Ascending aorta (tissue), 2 donors: ENCODE measurements at regions of chr1 and their contacts with region 1.

Region 1: DNA sequence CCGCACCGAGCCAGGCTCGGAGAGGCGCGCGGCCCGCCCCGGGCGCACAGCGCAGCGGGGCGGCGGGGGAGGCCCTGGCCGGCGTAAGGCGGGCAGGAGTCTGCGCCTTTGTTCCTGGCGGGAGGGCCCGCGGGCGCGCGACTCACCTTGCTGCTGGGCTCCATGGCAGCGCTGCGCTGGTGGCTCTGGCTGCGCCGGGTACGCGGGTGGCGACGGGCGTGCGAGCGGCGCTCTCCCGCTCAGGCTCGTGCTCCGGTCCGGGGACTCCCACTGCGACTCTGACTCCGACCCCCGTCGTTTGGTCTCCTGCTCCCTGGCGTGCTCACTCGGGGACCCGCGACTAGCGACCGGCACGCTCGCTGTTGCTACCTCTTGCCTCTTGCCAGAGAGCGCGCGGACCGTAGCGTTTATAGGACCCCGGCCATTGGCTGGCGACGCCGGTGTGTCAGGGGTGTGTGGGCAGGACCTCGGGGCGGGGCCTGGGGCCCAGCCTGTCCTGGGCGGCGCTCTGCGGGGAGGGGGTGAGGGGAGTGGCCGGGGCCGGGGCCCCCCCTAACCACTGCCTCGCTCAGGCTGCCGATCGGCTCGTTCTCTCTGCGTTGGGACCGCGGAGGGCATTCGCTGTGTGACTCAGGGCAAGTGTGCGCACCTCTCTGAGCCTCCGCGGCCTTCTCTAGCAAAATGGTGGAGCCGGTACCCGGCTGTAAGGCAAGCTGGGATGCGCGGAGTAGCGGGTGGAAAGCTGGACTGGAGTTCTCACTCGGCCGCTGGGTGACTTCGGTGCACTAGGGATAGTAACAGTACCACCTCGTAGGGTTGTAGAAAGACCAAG is at the start of gene SLC2A1:
- DNase-seq: peak; percentile 88 to 97
- H3K4me3 ChIP-seq: peak within 1 kb of the TSS; percentile 94 to 96
- H3K27ac ChIP-seq: peak within 1 kb of the TSS; percentile 93 to 97
- H3K4me1 ChIP-seq: peaks cover 13 to 34% of the 10 kb centered on the region in 2 donors
- H3K27me3 ChIP-seq: no peaks in the 10 kb centered on the region
- CTCF ChIP-seq: peak in 1 of 3 experiments; percentile 3
- total RNA-seq, gene SLC2A1: 15.5 TPM

Region 2: DNA sequence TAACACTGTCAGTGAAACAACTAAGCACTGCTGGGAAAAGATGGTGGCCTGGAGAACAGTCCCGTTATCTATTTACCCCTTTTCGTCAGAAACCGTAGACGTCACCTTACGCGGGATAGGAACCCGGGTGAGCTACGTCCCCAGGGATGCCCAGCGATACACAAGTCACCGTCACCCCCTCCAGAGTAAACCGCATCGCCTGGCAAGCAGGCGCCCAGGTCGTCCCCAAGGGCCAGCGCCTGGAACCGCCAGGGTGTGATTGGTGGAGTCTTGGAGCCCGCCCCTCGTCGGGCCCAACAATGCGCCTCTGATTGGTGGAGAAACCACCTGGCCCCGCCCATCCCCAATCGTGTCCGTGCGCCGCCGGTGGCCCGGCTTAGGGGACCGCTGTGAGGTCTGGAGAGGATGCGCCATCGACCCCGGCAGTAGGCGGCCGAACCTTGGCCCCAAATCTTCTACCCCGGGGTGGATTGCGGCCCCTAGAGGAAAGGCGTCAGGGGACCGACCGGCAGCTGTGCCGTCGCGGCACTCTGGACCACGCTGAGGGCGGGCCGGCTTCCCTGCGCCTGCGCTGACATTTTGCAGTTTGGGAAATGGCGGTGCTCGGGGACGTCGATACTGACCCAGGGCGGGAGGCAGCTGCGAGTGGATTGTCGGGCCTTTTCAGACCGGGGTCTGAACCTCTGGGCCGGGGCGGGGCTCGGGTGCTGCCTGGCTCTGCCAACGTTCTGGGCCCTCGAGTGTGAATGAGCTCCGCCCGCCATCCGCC is 34.4 kb before region 1 on chr1:
- intact Hi-C with region 1: loop called (anchors 1 kb)
- DNase-seq: peak; percentile 85 to 97
- H3K4me3 ChIP-seq: peak overlapping the region; percentile 81 to 89
- H3K27ac ChIP-seq: peak overlapping the region; percentile 97 to 98
- H3K4me1 ChIP-seq: peaks cover 3 to 9% of the 10 kb centered on the region in 2 donors
- H3K27me3 ChIP-seq: no peaks in the 10 kb centered on the region
- CTCF ChIP-seq: no peak

Region 3: GRCh38 chr1:42971841-42972291 is 13.2 kb after region 1 on chr1:
- intact Hi-C with region 1: no loop called
- DNase-seq: no peak
- H3K4me3 ChIP-seq: no peak overlapping the region
- H3K27ac ChIP-seq: no peak overlapping the region
- H3K4me1 ChIP-seq: peaks cover under 1 to 4% of the 10 kb centered on the region in 2 donors
- H3K27me3 ChIP-seq: no peaks in the 10 kb centered on the region
- CTCF ChIP-seq: no peak

Region 4: DNA sequence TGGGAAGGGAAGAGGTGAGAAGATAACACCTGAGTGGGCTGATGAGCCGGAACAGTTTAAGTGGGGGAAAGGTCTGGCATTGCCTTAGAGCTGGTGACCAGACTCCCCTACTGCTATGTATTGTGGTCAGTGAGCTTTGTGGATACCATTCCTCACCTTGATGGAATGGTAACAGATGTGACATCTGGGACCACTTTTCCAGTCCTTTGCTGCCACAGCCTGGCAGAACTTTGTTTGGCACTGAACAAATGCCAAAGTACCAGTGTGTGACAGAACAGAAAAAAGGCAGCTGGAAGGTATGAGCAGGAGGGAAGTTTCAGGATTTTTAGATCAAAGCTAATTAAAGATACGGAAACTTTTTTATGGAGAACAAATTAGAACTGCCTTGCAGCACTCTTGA is 424.7 kb after region 1 on chr1:
- intact Hi-C with region 1: no loop called
- DNase-seq: no peak
- H3K4me3 ChIP-seq: no peak overlapping the region
- H3K27ac ChIP-seq: no peak overlapping the region
- H3K4me1 ChIP-seq: peaks cover 7 to 11% of the 10 kb centered on the region in 2 donors
- H3K27me3 ChIP-seq: no peaks in the 10 kb centered on the region
- CTCF ChIP-seq: peak in 1 of 3 experiments; percentile 6

Region 5: DNA sequence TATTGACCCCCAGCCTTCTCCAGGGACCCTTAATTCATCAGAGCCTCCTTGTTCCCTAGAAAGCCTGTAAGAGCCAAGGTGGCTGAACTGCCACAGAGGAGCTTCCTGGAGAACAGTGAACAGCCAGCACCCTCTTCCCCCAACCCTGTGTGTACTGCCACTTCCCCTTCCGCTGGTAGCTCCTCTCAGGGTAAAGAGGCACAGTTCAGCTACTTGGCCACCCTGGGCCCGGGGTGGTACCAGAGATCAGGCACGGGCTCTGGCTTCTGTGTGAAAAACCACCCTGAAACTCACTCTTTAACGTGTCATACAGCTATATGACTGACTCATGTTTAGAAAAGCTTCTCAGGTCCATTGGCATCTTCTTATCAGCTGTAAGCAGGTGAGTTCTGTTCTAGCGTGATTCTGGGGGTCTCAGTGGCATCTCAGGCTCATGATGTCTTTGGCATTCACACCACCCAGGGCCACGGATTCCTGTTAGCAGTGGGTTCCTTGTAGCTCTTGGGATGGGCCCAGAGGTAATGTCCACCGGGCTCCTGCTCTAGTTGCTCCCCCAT is 1738.2 kb after region 1 on chr1:
- intact Hi-C with region 1: no loop called
- DNase-seq: no peak
- H3K4me3 ChIP-seq: no peak overlapping the region
- H3K27ac ChIP-seq: no peak overlapping the region
- H3K4me1 ChIP-seq: no peaks in the 10 kb centered on the region
- H3K27me3 ChIP-seq: no peaks in the 10 kb centered on the region
- CTCF ChIP-seq: no peak